Activated CD8-positive, alpha-beta T cell treated with anti-CD3 and anti-CD28 coated beads, Interleukin-2, amount 10 ng/mL, durations not matched to agents 7 days and 5 days (primary cell): ENCODE measurements at regions of chr15 and their contacts with region 1.

Region 1: DNA sequence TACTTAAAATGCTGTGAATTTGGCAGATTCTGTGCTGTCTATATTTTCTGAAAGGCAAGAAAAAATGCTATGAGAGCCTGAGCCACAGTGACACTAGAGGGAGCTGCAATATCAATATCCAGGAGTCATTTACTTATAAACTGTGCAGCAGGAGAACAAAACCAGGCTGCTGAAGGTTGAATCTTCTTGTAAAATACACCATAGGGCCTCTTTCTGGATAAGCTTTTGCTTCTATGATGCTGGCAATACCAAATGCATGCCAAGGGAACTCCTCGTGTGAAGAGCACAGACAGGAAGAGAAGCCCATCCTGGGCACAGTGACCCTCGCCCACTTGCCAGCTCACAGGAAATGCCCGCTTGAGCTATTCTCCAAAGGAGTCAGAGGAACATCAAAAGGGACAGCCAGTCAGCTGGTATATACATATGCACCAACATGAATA is 48.0 kb upstream of the TSPAN3 start:
- DNase-seq: peak; percentile 64
- ATAC-seq: peak; percentile 68
- H3K4me3 Mint-ChIP-seq: no peak overlapping the region
- H3K27ac Mint-ChIP-seq: no peak overlapping the region
- H3K4me1 Mint-ChIP-seq: peaks cover 18% of the 10 kb centered on the region
- H3K27me3 Mint-ChIP-seq: no peaks in the 10 kb centered on the region

Region 2: GRCh38 chr15:76912141-76912834 is 206.6 kb before region 1 on chr15:
- CTCF ChIA-PET with region 1: no interaction called
- POLR2A ChIA-PET with region 1: no interaction called
- DNase-seq: no peak
- ATAC-seq: no peak
- H3K4me3 Mint-ChIP-seq: no peak overlapping the region
- H3K27ac Mint-ChIP-seq: no peak overlapping the region
- H3K4me1 Mint-ChIP-seq: peaks cover 10% of the 10 kb centered on the region
- H3K27me3 Mint-ChIP-seq: peaks cover 4% of the 10 kb centered on the region

Region 3: DNA sequence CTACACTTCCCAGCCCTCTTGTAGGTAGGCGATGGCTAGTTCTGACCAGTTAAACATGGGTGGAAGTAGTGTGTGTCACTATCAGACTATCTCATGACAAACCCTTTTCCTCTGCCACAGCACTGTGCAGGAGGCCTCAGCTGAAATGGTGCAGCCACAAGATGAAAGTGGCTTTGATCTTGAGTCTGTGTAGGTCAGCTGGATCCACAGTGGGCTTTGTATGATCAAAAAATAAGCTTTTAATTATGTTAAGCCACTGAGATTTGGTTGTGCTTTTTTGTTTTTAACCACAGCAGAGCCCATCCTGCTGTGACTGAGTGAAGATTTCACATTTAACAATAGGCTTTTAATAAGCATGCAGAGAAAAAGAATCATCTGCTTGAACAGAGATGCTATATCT is 167.7 kb before region 1 on chr15:
- CTCF ChIA-PET with region 1: no interaction called
- POLR2A ChIA-PET with region 1: no interaction called
- DNase-seq: peak; percentile 34
- ATAC-seq: peak; percentile 79
- H3K4me3 Mint-ChIP-seq: no peak overlapping the region
- H3K27ac Mint-ChIP-seq: peak overlapping the region; percentile 58
- H3K4me1 Mint-ChIP-seq: peaks cover 15% of the 10 kb centered on the region
- H3K27me3 Mint-ChIP-seq: no peaks in the 10 kb centered on the region

Region 4: GRCh38 chr15:77107531-77108355 is 11.2 kb before region 1 on chr15:
- CTCF ChIA-PET with region 1: interaction called, 32 read pairs
- POLR2A ChIA-PET with region 1: no interaction called
- DNase-seq: peak; percentile 67
- ATAC-seq: peak; percentile 65
- H3K4me3 Mint-ChIP-seq: no peak overlapping the region
- H3K27ac Mint-ChIP-seq: no peak overlapping the region
- H3K4me1 Mint-ChIP-seq: peaks cover 2% of the 10 kb centered on the region
- H3K27me3 Mint-ChIP-seq: no peaks in the 10 kb centered on the region

Region 5: DNA sequence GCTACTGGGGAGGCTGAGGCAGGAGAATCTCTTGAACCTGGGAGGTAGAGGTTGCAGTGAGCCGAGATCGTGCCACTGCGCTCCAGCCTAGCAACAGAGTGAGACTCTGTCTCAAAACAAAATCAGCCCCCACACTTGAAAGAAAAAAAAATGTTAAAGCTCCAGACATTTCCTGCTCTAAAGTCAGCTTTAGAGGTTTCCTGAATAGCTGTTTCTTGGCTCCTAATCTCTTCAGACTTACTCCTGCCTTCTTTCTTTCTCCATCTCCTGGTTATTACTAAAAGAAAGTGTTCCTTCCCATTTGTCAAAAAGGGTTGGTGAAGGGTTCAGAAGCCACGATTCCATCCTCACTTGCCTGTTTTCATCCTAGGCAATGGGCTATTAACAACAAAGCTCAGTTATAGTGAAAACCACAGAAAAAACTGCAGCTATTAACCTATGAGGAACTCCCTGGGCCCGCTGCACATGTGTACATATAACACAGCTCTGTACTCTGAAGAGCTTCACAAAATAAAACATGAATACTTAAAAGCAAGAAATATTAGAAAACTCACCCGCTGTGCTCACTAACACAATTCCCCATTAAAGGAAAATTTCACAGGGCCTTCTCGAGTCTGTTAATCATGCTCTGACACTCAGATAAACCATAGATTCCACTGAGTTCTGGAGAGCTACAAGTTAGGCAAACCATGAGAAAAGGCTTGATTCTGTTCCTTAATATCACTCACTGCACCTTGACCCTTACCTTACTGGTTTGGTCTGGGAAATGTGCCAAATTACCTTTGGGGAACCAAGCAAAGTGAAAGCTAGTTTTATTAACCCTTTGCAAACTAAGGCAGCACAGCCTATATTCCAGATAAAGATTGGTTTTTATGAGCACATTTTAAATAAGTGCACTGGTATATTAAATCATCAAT is 41.9 kb after region 1 on chr15:
- CTCF ChIA-PET with region 1: interaction called, 10 read pairs
- POLR2A ChIA-PET with region 1: no interaction called
- DNase-seq: no peak
- ATAC-seq: peak; percentile 57
- H3K4me3 Mint-ChIP-seq: peak overlapping the region; percentile 8
- H3K27ac Mint-ChIP-seq: peak overlapping the region; percentile 47
- H3K4me1 Mint-ChIP-seq: peaks cover 38% of the 10 kb centered on the region
- H3K27me3 Mint-ChIP-seq: no peaks in the 10 kb centered on the region

Region 6: DNA sequence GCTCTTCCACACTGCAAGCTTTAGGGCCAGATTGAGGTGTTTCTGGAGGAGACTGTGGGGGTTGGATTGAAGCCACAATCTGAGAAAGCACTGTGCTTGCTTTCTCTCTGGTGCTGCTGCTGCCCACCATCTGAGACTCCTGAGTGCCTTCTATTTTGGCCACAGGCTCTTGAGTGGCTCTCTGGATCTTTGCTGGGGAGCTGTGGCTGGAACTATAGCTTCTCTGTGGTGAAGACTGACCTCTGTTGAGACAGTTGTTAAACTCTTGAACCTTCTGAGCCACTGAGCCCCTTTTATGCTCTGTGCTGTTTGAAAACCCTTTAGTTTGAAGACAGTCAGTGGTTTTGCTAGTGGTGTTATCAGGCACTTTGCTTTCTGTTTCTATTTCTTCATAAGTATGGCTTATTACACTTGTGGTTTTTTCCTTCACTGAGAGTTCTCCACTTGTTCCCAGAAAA is 60.7 kb after region 1 on chr15:
- CTCF ChIA-PET with region 1: interaction called, 55 read pairs
- POLR2A ChIA-PET with region 1: interaction called, 3 read pairs
- DNase-seq: peak; percentile 61
- ATAC-seq: peak; percentile 87
- H3K4me3 Mint-ChIP-seq: peak overlapping the region; percentile 60
- H3K27ac Mint-ChIP-seq: peak overlapping the region; percentile 91
- H3K4me1 Mint-ChIP-seq: peaks cover 49% of the 10 kb centered on the region
- H3K27me3 Mint-ChIP-seq: no peaks in the 10 kb centered on the region

Region 7: GRCh38 chr15:77186594-77187011 is 67.7 kb after region 1 on chr15:
- CTCF ChIA-PET with region 1: interaction called, 55 read pairs
- POLR2A ChIA-PET with region 1: interaction called, 3 read pairs
- DNase-seq: peak; percentile 31
- ATAC-seq: no peak
- H3K4me3 Mint-ChIP-seq: no peak overlapping the region
- H3K27ac Mint-ChIP-seq: no peak overlapping the region
- H3K4me1 Mint-ChIP-seq: peaks cover 48% of the 10 kb centered on the region
- H3K27me3 Mint-ChIP-seq: no peaks in the 10 kb centered on the region

Region 8: GRCh38 chr15:77496710-77497103 is 377.8 kb after region 1 on chr15:
- CTCF ChIA-PET with region 1: interaction called, 31 read pairs
- POLR2A ChIA-PET with region 1: no interaction called
- DNase-seq: peak; percentile 76
- ATAC-seq: peak; percentile 86
- H3K4me3 Mint-ChIP-seq: no peak overlapping the region
- H3K27ac Mint-ChIP-seq: no peak overlapping the region
- H3K4me1 Mint-ChIP-seq: peaks cover 20% of the 10 kb centered on the region
- H3K27me3 Mint-ChIP-seq: no peaks in the 10 kb centered on the region